PC-9 (cell line): ENCODE measurements at regions of chr17 and their contacts with region 1.

Region 1: GRCh38 chr17:7915611-7916382 is at the start of gene RNF227:
- DNase-seq: peak; percentile 67 to 91
- H3K4me3 ChIP-seq: peak within 1 kb of the TSS; percentile 60
- H3K27ac ChIP-seq: no peak within 1 kb of the TSS
- H3K4me1 ChIP-seq: no peaks in the 10 kb centered on the region
- H3K27me3 ChIP-seq: no peaks in the 10 kb centered on the region
- CTCF ChIP-seq: no peak
- total RNA-seq, gene RNF227: 3.1 and 4.2 TPM in 2 replicates

Region 2: DNA sequence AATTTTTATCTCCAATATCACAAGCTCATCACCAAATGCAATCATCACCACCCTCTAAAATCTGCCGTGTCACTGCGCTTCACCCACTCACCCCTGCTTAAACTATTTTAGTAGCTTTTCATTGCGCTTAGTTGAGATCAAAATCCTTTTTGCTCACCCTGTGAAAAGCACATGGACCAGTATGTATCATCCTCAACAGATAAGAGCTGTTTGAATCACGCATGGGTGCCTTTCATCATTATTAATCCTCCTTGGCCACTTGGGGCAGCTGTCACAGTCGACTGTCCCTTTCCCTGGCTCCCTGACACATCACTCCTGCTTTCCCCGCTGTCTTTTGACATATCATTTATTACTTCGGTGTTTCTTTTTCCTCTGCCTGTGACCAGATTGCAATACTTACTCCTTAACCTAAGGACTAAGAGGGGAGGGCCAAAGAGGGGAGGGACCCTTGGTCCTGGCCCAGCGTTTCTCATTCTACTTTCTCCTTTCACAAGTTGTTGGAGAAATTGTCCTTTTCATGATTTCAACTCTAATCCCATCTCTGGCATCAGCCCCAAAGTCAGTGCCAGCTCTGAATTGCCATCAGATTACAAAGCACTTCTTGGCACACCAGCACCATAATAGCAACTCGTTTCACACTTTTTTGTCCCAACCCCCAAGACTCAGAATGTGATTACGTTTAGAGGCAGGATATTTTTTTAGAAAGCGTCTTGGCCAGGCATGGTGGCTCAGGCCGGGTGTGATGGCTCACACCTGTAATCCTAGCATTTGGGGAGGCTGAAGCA is 90.4 kb before region 1 on chr17:
- CTCF ChIA-PET with region 1: no interaction called
- POLR2A ChIA-PET with region 1: no interaction called
- intact Hi-C with region 1: no loop called
- DNase-seq: no peak
- H3K4me3 ChIP-seq: no peak overlapping the region
- H3K27ac ChIP-seq: no peak overlapping the region
- H3K4me1 ChIP-seq: no peaks in the 10 kb centered on the region
- H3K27me3 ChIP-seq: no peaks in the 10 kb centered on the region
- CTCF ChIP-seq: no peak

Region 3: GRCh38 chr17:7862692-7863437 is 52.9 kb before region 1 on chr17:
- CTCF ChIA-PET with region 1: no interaction called
- POLR2A ChIA-PET with region 1: interaction called, 4 read pairs
- intact Hi-C with region 1: loop called (anchors 5 kb)
- DNase-seq: peak in 1 of 2 experiments; percentile 49
- H3K4me3 ChIP-seq: no peak overlapping the region
- H3K27ac ChIP-seq: no peak overlapping the region
- H3K4me1 ChIP-seq: peaks cover 7% of the 10 kb centered on the region; the same call in 1 of the 2 replicates
- H3K27me3 ChIP-seq: no peaks in the 10 kb centered on the region
- CTCF ChIP-seq: peak; percentile 87

Region 4: GRCh38 chr17:7887482-7888183 is 28.2 kb before region 1 on chr17:
- CTCF ChIA-PET with region 1: interaction called, 3 read pairs
- POLR2A ChIA-PET with region 1: no interaction called
- intact Hi-C with region 1: loop called (anchors 1 kb)
- DNase-seq: peak; percentile 88 to 94
- H3K4me3 ChIP-seq: peak overlapping the region; percentile 84
- H3K27ac ChIP-seq: peak overlapping the region; percentile 80
- H3K4me1 ChIP-seq: peaks cover 27% of the 10 kb centered on the region
- H3K27me3 ChIP-seq: no peaks in the 10 kb centered on the region
- CTCF ChIP-seq: no peak

Region 5: DNA sequence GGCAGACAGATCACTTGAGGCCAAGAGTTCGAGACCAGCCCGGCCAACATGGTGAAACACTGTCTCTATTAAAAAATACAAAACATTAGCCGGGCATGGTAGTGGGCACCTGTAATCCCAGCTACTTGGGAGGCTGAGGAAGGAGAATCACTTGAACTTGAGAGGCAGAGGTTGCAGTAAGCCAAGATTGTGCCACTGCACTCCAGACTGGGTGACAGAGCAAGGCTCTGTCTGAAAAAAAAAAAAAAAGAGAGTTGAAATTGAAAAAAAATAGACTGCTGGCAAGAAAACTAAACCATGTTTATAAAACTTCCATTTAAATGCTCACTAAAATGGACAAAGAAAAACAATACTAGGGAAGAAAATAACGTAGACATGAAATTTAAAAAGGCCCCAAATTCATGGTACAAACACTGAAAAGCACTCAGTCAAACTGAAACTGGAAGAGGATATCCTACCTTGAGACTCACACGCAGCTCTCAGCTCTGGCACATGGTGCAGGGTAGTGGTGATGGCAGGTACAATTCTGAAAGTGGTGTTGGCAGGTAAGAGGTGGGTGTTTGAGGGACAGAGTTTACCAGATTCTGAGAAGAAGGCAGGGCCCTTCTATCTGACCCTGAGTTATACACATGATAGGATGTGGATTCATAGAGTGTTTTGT is 35.5 kb after region 1 on chr17:
- CTCF ChIA-PET with region 1: no interaction called
- POLR2A ChIA-PET with region 1: no interaction called
- intact Hi-C with region 1: no loop called
- DNase-seq: no peak
- H3K4me3 ChIP-seq: no peak overlapping the region
- H3K27ac ChIP-seq: no peak overlapping the region
- H3K4me1 ChIP-seq: no peaks in the 10 kb centered on the region
- H3K27me3 ChIP-seq: no peaks in the 10 kb centered on the region
- CTCF ChIP-seq: no peak

Region 6: GRCh38 chr17:7989781-7990655 is 74.2 kb after region 1 on chr17:
- CTCF ChIA-PET with region 1: interaction called, 7 read pairs
- POLR2A ChIA-PET with region 1: no interaction called
- intact Hi-C with region 1: loop called (anchors 1 kb)
- DNase-seq: peak; percentile 40 to 92
- H3K4me3 ChIP-seq: peak overlapping the region; percentile 62
- H3K27ac ChIP-seq: no peak overlapping the region
- H3K4me1 ChIP-seq: no peaks in the 10 kb centered on the region; the same call in 1 of the 2 replicates
- H3K27me3 ChIP-seq: no peaks in the 10 kb centered on the region
- CTCF ChIP-seq: peak; percentile 83

Region 7: DNA sequence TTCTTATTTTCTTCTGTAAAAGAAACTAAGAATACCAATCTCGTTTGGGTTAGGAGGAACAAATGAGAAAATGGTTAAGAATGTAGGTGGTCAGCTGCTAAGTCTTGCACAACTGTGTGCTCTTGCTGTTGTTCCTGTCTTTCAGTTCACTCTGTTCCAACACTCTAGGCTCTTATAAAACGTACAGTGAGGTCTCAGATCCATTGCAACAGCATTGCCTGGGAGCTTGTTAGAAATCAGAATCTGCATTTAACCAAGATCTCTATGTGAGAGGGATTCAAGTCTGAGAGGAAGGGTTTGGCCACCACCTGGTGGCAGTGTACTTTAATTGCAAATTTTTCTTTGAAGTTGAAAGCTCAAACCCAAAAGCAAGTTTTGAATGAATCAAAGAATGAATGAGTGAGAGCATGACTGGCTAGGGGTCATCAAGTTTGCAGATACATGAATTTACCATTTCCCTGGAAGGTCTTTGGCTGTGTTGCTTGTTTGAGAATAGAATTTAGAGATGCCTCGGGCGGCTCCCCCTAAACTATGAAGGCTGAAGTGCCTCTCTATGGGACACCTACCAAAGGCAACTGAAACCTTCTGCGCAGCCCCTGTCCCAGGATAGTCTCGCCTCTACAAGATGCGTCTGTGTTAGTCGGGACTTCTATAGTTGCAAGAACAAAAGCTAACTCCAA is 125.6 kb after region 1 on chr17:
- CTCF ChIA-PET with region 1: interaction called, 9 read pairs
- POLR2A ChIA-PET with region 1: no interaction called
- intact Hi-C with region 1: loop called (anchors 1 kb)
- DNase-seq: peak; percentile 43 to 51
- H3K4me3 ChIP-seq: no peak overlapping the region
- H3K27ac ChIP-seq: no peak overlapping the region
- H3K4me1 ChIP-seq: peaks cover 5% of the 10 kb centered on the region; the same call in 1 of the 2 replicates
- H3K27me3 ChIP-seq: no peaks in the 10 kb centered on the region
- CTCF ChIP-seq: peak; percentile 77

Region 8: GRCh38 chr17:8248751-8249607 is 333.2 kb after region 1 on chr17 and contains the start of gene PFAS:
- CTCF ChIA-PET with region 1: no interaction called
- POLR2A ChIA-PET with region 1: interaction called, 20 read pairs
- intact Hi-C with region 1: no loop called
- DNase-seq: peak; percentile 83 to 96
- H3K4me3 ChIP-seq: peak within 1 kb of the TSS; percentile 99
- H3K27ac ChIP-seq: peak within 1 kb of the TSS; percentile 93
- H3K4me1 ChIP-seq: peaks cover 8% of the 10 kb centered on the region; the same call in 1 of the 2 replicates
- H3K27me3 ChIP-seq: no peaks in the 10 kb centered on the region
- CTCF ChIP-seq: no peak
- total RNA-seq, gene PFAS: 54.5 and 68.2 TPM in 2 replicates